Right ventricle myocardium inferior (tissue), 1 donor: ENCODE measurements at regions of chr3 and their contacts with region 1.

Region 1: GRCh38 chr3:139343895-139344856 is at the start of gene MRPS22:
- DNase-seq: peak; percentile 91
- ATAC-seq: peak; percentile 93
- total RNA-seq, gene MRPS22: 87.3 TPM

Region 2: GRCh38 chr3:139389458-139390209 is 45.5 kb after region 1 on chr3 and contains the start of gene COPB2:
- intact Hi-C with region 1: loop called (anchors 5 kb)
- DNase-seq: peak; percentile 99
- ATAC-seq: peak; percentile 99
- total RNA-seq, gene COPB2: 62.1 TPM

Region 3: DNA sequence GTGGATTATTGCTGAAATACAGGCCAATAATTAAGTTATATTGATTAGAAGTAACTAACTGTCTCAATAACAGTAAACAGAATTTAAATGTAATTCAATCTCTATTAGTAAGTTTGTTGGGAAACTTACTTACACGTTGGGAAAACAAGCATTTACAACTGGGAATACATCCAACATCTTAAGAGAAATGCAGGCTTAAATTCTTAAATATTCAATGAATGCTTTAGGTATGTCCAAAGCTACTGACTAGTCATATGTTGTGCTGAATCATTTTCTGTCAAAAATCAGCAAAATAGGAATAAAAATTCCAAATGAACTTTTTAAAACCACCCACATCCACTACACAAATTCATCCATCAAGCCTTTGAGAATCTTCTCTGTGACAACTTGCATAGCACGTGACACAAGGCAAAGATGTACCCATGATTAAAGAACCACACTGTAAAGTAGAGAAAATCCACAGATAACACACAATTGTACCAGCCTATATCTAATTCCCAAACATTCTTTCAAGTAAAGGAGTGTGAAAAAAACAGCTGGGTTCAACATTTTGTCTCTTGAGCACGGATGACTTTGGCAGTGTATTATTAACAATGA is 273.6 kb after region 1 on chr3:
- intact Hi-C with region 1: no loop called
- DNase-seq: no peak
- ATAC-seq: no peak